Activated T-helper 2 cell treated with anti-CD3 and anti-CD28 coated beads, Interferon-gamma antibody, Interleukin-2, Interleukin-4, amounts not matched to agents 10 μg/mL and 5 μg/mL and 100 μg/mL, durations not matched to agents 14 hours and 24 hours and 36 hours (primary cell): ENCODE measurements at regions of chr10 and their contacts with region 1.

Region 1: GRCh38 chr10:68901104-68901927 is at the start of gene DDX50:
- DNase-seq: peak; percentile 95
- H3K4me3 Mint-ChIP-seq: peak within 1 kb of the TSS; percentile 92
- H3K27ac Mint-ChIP-seq: peak within 1 kb of the TSS; percentile 99
- H3K4me1 Mint-ChIP-seq: peaks cover 40% of the 10 kb centered on the region
- H3K27me3 Mint-ChIP-seq: peaks cover 3% of the 10 kb centered on the region
- total RNA-seq, gene DDX50: 57.0 and 63.4 TPM in 2 replicates

Region 2: GRCh38 chr10:68331455-68332258 is 569.7 kb before region 1 on chr10 and contains the start of gene HNRNPH3:
- intact Hi-C with region 1: loop called (anchors 1 kb)
- DNase-seq: peak; percentile 98
- H3K4me3 Mint-ChIP-seq: peak within 1 kb of the TSS; percentile 99
- H3K27ac Mint-ChIP-seq: peak within 1 kb of the TSS; percentile 100
- H3K4me1 Mint-ChIP-seq: peaks cover 45% of the 10 kb centered on the region
- H3K27me3 Mint-ChIP-seq: no peaks in the 10 kb centered on the region
- total RNA-seq, gene HNRNPH3: 172 and 183 TPM in 2 replicates

Region 3: DNA sequence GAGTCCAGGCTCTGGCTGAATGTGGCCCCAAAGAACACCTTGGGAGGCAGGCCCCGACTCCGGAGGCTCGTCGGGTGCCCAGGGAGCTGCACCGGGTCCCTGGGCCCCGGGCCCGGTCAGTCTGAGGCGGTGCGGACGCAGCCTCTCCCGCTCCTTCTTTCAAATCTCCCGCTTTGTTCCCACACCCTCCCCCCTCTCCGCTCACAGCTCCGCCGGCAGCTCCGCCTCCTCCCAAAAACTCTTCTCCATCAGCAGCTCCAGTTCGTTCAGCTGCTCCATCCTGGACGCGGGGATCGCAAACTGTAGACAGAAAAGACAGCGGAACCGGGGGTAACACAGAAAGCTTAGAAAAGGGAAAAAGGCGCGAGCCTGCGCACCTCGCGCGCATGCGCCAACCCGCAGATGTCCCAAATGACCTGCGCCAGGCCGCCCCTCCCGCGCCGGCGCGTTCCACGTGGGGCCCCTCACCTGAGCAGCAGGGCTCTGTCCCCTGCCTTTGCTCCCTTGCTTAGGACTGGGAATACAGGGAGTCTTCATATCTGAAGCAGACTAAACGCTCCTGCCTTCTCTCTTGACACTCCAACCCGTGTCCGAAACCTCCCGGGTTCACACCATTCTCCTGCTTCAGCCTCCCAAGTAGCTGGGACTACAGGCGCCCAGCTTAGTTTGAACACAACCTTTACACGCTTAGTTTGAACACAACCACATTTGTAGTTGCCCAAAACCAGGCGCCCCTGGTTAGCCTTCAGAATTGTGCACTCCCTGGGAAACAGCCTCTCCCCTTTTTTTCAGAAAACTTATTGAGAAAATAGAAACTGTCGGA is 429.5 kb before region 1 on chr10 and contains the start of gene DNA2:
- intact Hi-C with region 1: loop called (anchors 5 kb)
- DNase-seq: peak; percentile 79
- H3K4me3 Mint-ChIP-seq: peak within 1 kb of the TSS; percentile 97
- H3K27ac Mint-ChIP-seq: peak within 1 kb of the TSS; percentile 95
- H3K4me1 Mint-ChIP-seq: peaks cover 26% of the 10 kb centered on the region
- H3K27me3 Mint-ChIP-seq: no peaks in the 10 kb centered on the region
- total RNA-seq, gene DNA2: 51.6 and 54.3 TPM in 2 replicates

Region 4: DNA sequence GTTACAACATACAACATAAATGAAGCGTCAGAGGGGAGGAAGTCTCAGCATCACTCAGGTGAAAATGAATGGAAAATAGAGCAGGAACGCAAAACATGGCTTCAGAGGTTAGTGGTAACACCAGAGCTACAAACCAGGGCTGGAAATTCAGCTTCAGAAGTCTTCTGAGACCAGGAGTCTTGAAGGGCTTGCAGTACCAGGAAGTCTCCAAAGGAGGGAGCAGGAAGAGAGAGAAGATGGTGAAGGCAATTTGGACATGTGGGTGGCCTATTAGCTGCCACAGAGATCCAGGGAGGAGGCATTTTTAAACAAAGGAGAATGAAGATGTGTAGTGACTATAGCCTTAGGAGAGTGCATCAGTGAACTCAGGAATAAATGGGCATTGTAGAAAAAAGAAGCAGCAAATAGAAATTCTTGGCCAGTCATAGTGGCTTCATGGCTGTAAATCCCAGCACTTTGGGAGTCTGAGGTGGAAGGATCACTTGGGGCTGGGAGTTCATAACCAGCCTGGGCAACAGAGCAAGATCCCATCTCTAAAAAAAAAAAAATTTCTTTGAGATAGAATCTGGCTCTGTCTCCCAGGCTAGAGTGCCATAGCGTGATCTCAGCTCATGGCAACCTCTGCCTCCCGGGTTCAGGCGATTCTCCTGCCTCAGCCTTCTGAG is 350.4 kb before region 1 on chr10:
- intact Hi-C with region 1: loop called (anchors 2 kb)
- DNase-seq: peak; percentile 24
- H3K4me3 Mint-ChIP-seq: no peak overlapping the region
- H3K27ac Mint-ChIP-seq: no peak overlapping the region
- H3K4me1 Mint-ChIP-seq: no peaks in the 10 kb centered on the region
- H3K27me3 Mint-ChIP-seq: no peaks in the 10 kb centered on the region

Region 5: GRCh38 chr10:68955832-68956532 is 54.7 kb after region 1 on chr10 and contains the start of gene DDX21:
- intact Hi-C with region 1: loop called (anchors 1 kb)
- DNase-seq: peak; percentile 86
- H3K4me3 Mint-ChIP-seq: peak within 1 kb of the TSS; percentile 97
- H3K27ac Mint-ChIP-seq: peak within 1 kb of the TSS; percentile 100
- H3K4me1 Mint-ChIP-seq: peaks cover 22% of the 10 kb centered on the region
- H3K27me3 Mint-ChIP-seq: no peaks in the 10 kb centered on the region
- total RNA-seq, gene DDX21: 205 and 210 TPM in 2 replicates

Region 6: GRCh38 chr10:69318106-69318866 is 417.0 kb after region 1 on chr10:
- intact Hi-C with region 1: loop called (anchors 5 kb)
- DNase-seq: peak; percentile 90
- H3K4me3 Mint-ChIP-seq: peak overlapping the region; percentile 97
- H3K27ac Mint-ChIP-seq: peak overlapping the region; percentile 86
- H3K4me1 Mint-ChIP-seq: peaks cover 49% of the 10 kb centered on the region
- H3K27me3 Mint-ChIP-seq: no peaks in the 10 kb centered on the region